ENCODE measurements at regions of chr9 and their contacts with region 1.

Region 1: DNA sequence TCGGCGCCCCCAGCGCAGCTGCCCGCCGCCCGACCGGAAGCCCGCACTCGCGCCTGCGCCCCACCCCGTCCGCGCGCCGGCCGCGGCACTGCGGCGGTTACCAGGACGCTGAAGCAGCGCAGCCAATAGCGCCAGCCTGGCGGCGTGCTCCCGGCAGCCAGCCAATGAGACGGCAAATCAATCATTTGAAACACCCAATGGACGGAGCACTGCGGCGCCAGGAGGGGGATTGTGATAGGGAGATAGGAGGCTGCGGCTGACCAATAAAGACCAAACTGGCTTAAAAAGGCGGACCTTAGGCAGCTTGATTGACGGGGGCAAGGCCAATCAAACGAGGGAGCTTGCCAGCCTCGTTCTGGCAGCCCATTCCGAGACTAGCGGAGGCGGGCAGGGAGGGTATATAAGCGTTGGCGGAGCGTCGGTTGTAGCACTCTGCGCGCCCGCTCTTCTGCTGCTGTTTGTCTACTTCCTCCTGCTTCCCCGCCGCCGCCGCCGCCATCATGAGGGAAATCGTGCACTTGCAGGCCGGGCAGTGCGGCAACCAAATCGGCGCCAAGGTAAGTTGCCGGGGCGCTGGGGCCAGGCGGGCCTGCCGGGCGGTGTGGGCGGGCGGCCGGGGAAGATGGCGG is at the start of gene TUBB4B:
- DNase-seq: peak; percentile 100
- ATAC-seq: peak; percentile 74
- H3K4me3 ChIP-seq: peak within 1 kb of the TSS; percentile 50 to 84 (median 75)
- H3K4me3 Mint-ChIP-seq: peak within 1 kb of the TSS; percentile 92
- H3K27ac ChIP-seq: peak within 1 kb of the TSS; percentile 83 to 90
- H3K27ac Mint-ChIP-seq: peak within 1 kb of the TSS; percentile 97
- H3K4me1 ChIP-seq: peaks cover 29 to 53% of the 10 kb centered on the region in 2 donors
- H3K4me1 Mint-ChIP-seq: peaks cover 42% of the 10 kb centered on the region
- H3K27me3 ChIP-seq: no peaks in the 10 kb centered on the region
- H3K27me3 Mint-ChIP-seq: no peaks in the 10 kb centered on the region
- CTCF ChIP-seq: no peak
- total RNA-seq, gene TUBB4B: 110 and 111 TPM in 2 replicates

Region 2: GRCh38 chr9:137046098-137046787 is 194.7 kb before region 1 on chr9 and contains the start of gene NPDC1:
- CTCF ChIA-PET with region 1: interaction called, 6 read pairs
- POLR2A ChIA-PET with region 1: interaction called, 3 read pairs
- intact Hi-C with region 1: loop called (anchors 2 kb)
- DNase-seq: peak; percentile 89
- ATAC-seq: peak; percentile 96
- H3K4me3 ChIP-seq: peak within 1 kb of the TSS in 3 of 5 experiments; percentile 18 to 46 (median 23)
- H3K4me3 Mint-ChIP-seq: peak within 1 kb of the TSS; percentile 47
- H3K27ac ChIP-seq: no peak within 1 kb of the TSS
- H3K27ac Mint-ChIP-seq: peak within 1 kb of the TSS; percentile 15
- H3K4me1 ChIP-seq: peaks cover 24 to 42% of the 10 kb centered on the region in 2 donors
- H3K4me1 Mint-ChIP-seq: peaks cover 10% of the 10 kb centered on the region
- H3K27me3 ChIP-seq: peaks cover 0 to 86% (median 53%) of the 10 kb centered on the region in 4 experiments
- H3K27me3 Mint-ChIP-seq: peaks cover 17% of the 10 kb centered on the region
- CTCF ChIP-seq: peak; percentile 87
- total RNA-seq, gene NPDC1: 0.17 and 0.39 TPM in 2 replicates

Region 3: DNA sequence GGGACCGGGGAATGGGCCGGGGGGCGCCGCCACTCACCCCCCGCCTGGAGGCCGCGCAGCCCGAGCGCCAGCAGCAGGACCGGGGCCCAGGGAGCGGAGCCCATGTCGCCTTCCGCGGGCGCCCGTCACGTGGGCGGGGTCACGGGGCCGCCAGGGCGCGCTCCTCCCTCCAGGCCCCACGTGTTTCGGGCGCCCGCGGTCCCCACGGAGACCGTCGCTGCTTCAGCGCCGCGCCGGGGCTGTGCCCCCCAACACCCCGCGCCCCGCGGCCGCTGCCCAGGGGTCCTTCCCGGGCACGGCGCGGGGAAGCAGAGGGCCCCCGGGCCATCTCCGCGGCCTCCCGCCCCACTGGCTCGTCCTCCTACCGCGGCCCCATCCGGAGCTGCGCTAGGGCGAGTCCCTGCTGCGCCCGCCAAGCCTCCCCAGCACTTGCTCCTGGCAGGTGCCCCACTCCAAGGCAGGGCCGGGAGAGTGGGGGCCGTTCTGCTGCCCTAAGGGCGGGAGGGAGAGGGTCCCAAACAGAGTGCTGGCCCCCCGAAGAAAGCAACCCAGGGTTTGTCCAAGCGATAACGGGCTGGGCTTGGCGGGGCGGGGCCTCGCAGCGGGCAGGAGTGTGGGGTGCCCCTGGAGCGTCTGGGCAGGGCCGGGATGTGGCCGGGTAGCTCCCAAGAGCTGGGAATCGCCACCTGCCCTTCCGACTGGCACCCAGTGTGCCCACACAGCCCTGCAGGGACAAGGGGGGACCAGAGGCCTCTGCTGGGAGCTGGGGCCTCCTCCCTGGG is 126.2 kb before region 1 on chr9 and contains the start of gene DPP7:
- CTCF ChIA-PET with region 1: interaction called, 5 read pairs
- POLR2A ChIA-PET with region 1: interaction called, 3 read pairs
- intact Hi-C with region 1: loop called (anchors 2 kb)
- DNase-seq: peak; percentile 90
- ATAC-seq: peak; percentile 90
- H3K4me3 ChIP-seq: peak within 1 kb of the TSS; percentile 11 to 79 (median 60)
- H3K4me3 Mint-ChIP-seq: peak within 1 kb of the TSS; percentile 81
- H3K27ac ChIP-seq: peak within 1 kb of the TSS; percentile 55 to 83
- H3K27ac Mint-ChIP-seq: peak within 1 kb of the TSS; percentile 50
- H3K4me1 ChIP-seq: peaks cover 17 to 28% of the 10 kb centered on the region in 2 donors
- H3K4me1 Mint-ChIP-seq: peaks cover 20% of the 10 kb centered on the region
- H3K27me3 ChIP-seq: no peaks in the 10 kb centered on the region
- H3K27me3 Mint-ChIP-seq: no peaks in the 10 kb centered on the region
- CTCF ChIP-seq: no peak
- total RNA-seq, gene DPP7: 324 and 335 TPM in 2 replicates

Region 4: GRCh38 chr9:137188490-137189296 is 52.3 kb before region 1 on chr9 and contains the starts of genes ANAPC2 and SSNA1:
- CTCF ChIA-PET with region 1: interaction called, 22 read pairs
- POLR2A ChIA-PET with region 1: interaction called, 8 read pairs
- intact Hi-C with region 1: loop called (anchors 1 kb)
- DNase-seq: peak; percentile 97
- ATAC-seq: peak; percentile 84
- H3K4me3 ChIP-seq: peak within 1 kb of the TSS; percentile 50 to 99 (median 98)
- H3K4me3 Mint-ChIP-seq: peak within 1 kb of the TSS; percentile 96
- H3K27ac ChIP-seq: peak within 1 kb of the TSS; percentile 78 to 90
- H3K27ac Mint-ChIP-seq: peak within 1 kb of the TSS; percentile 97
- H3K4me1 ChIP-seq: peaks cover 26 to 40% of the 10 kb centered on the region in 2 donors
- H3K4me1 Mint-ChIP-seq: peaks cover 36% of the 10 kb centered on the region
- H3K27me3 ChIP-seq: no peaks in the 10 kb centered on the region
- H3K27me3 Mint-ChIP-seq: no peaks in the 10 kb centered on the region
- CTCF ChIP-seq: peak; percentile 49
- total RNA-seq, gene ANAPC2: 121 and 129 TPM in 2 replicates
- total RNA-seq, gene SSNA1: 52.9 and 53.6 TPM in 2 replicates

Region 5: DNA sequence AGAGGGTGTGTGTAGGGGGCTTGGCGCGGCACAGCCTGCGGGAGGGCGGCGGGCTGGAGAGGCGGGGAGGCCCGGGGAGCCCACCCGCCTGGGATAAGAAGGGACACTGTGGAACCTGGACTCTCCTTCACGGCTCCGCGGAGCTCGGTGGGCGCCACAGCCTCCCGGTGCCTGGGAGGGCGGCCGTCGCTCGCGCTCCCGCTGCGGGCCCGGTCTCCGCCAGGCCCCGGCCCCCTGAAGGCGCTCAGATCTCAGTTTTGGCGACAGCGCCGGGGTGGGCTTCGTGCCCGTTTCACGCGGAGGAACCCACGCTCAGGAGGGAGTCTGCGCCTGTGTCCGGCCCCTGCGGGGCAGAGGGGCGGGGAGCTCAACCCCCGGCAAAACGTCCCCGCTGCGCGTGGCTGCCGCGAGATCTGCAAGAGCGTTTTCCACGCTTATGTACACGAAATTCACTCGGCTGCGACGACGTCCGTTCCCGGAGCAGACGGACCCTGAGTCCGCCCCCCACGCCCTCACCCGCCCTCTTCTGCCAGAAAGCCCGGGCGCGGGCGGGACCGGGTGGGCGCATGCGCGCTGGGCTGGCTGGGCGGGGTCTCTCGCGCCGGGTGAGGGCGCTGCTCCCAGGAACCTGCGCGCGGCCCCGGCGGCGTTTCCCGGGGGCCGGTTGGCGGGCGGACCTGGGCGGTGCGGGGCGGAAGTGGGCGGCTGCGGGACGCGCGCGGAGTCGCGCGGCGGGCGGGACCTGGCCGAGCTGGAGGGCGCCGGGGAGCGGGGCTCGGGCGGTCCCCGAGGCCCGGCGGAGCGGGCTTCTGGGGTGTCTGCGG is 13.9 kb after region 1 on chr9 and contains the start of gene NELFB:
- CTCF ChIA-PET with region 1: interaction called, 18 read pairs
- POLR2A ChIA-PET with region 1: interaction called, 29 read pairs
- intact Hi-C with region 1: loop called (anchors 1 kb)
- DNase-seq: peak; percentile 94
- ATAC-seq: peak; percentile 88
- H3K4me3 ChIP-seq: peak within 1 kb of the TSS; percentile 44 to 95 (median 81)
- H3K4me3 Mint-ChIP-seq: peak within 1 kb of the TSS; percentile 89
- H3K27ac ChIP-seq: peak within 1 kb of the TSS; percentile 3 to 72
- H3K27ac Mint-ChIP-seq: peak within 1 kb of the TSS; percentile 89
- H3K4me1 ChIP-seq: peaks cover 17 to 27% of the 10 kb centered on the region in 2 donors
- H3K4me1 Mint-ChIP-seq: peaks cover 25% of the 10 kb centered on the region
- H3K27me3 ChIP-seq: no peaks in the 10 kb centered on the region
- H3K27me3 Mint-ChIP-seq: no peaks in the 10 kb centered on the region
- CTCF ChIP-seq: no peak
- total RNA-seq, gene NELFB: 55.8 and 56.9 TPM in 2 replicates

Region 6: GRCh38 chr9:137277329-137278041 is 36.5 kb after region 1 on chr9 and contains the start of gene TOR4A:
- CTCF ChIA-PET with region 1: interaction called, 11 read pairs
- POLR2A ChIA-PET with region 1: interaction called, 4 read pairs
- intact Hi-C with region 1: no loop called
- DNase-seq: peak; percentile 75
- ATAC-seq: peak; percentile 77
- H3K4me3 ChIP-seq: peak within 1 kb of the TSS; percentile 12 to 88 (median 82)
- H3K4me3 Mint-ChIP-seq: peak within 1 kb of the TSS; percentile 90
- H3K27ac ChIP-seq: peak within 1 kb of the TSS; percentile 76 to 79
- H3K27ac Mint-ChIP-seq: peak within 1 kb of the TSS; percentile 93
- H3K4me1 ChIP-seq: peaks cover 32 to 59% of the 10 kb centered on the region in 2 donors
- H3K4me1 Mint-ChIP-seq: peaks cover 44% of the 10 kb centered on the region
- H3K27me3 ChIP-seq: no peaks in the 10 kb centered on the region
- H3K27me3 Mint-ChIP-seq: no peaks in the 10 kb centered on the region
- CTCF ChIP-seq: no peak
- total RNA-seq, gene TOR4A: 12.7 and 15.3 TPM in 2 replicates

Region 7: GRCh38 chr9:137445275-137445807 is 204.4 kb after region 1 on chr9:
- CTCF ChIA-PET with region 1: no interaction called
- POLR2A ChIA-PET with region 1: interaction called, 3 read pairs
- intact Hi-C with region 1: loop called (anchors 1 kb)
- DNase-seq: peak; percentile 88
- ATAC-seq: peak; percentile 89
- H3K4me3 ChIP-seq: no peak overlapping the region
- H3K4me3 Mint-ChIP-seq: no peak overlapping the region
- H3K27ac ChIP-seq: no peak overlapping the region
- H3K27ac Mint-ChIP-seq: no peak overlapping the region
- H3K4me1 ChIP-seq: peaks cover 7 to 23% of the 10 kb centered on the region in 2 donors
- H3K4me1 Mint-ChIP-seq: peaks cover 8% of the 10 kb centered on the region
- H3K27me3 ChIP-seq: peaks cover 0 to 20% (median 7%) of the 10 kb centered on the region in 4 experiments
- H3K27me3 Mint-ChIP-seq: peaks cover 11% of the 10 kb centered on the region
- CTCF ChIP-seq: peak; percentile 83